Dendritic cell treated with granulocyte-macrophage colony-stimulating factor and Interleukin-4, amounts not matched to agents 40 ng/mL and 50 ng/mL, for 4 days (primary cell): ENCODE measurements at regions of chr17 and their contacts with region 1.

Region 1: GRCh38 chr17:41322094-41322902 is 6.8 kb upstream of the KRTAP17-1 start:
- H3K4me3 Mint-ChIP-seq: no peak overlapping the region
- H3K27ac Mint-ChIP-seq: no peak overlapping the region
- H3K4me1 Mint-ChIP-seq: peaks cover 4% of the 10 kb centered on the region
- H3K27me3 Mint-ChIP-seq: peaks cover 6% of the 10 kb centered on the region

Region 2: GRCh38 chr17:40803617-40804082 is 518.6 kb before region 1 on chr17:
- intact Hi-C with region 1: loop called (anchors 10 kb)
- H3K4me3 Mint-ChIP-seq: no peak overlapping the region
- H3K27ac Mint-ChIP-seq: no peak overlapping the region
- H3K4me1 Mint-ChIP-seq: no peaks in the 10 kb centered on the region
- H3K27me3 Mint-ChIP-seq: peaks cover 42% of the 10 kb centered on the region

Region 3: GRCh38 chr17:40909351-40909750 is 412.9 kb before region 1 on chr17:
- intact Hi-C with region 1: loop called (anchors 2 kb)
- H3K4me3 Mint-ChIP-seq: no peak overlapping the region
- H3K27ac Mint-ChIP-seq: no peak overlapping the region
- H3K4me1 Mint-ChIP-seq: peaks cover 33% of the 10 kb centered on the region
- H3K27me3 Mint-ChIP-seq: peaks cover 30% of the 10 kb centered on the region

Region 4: GRCh38 chr17:41486809-41487720 is 164.8 kb after region 1 on chr17:
- intact Hi-C with region 1: no loop called
- H3K4me3 Mint-ChIP-seq: no peak overlapping the region
- H3K27ac Mint-ChIP-seq: no peak overlapping the region
- H3K4me1 Mint-ChIP-seq: peaks cover 47% of the 10 kb centered on the region
- H3K27me3 Mint-ChIP-seq: peaks cover 10% of the 10 kb centered on the region